Activated T-helper 1 cell treated with anti-CD3 and anti-CD28 coated beads, Interleukin-12 subunit alpha, Interleukin-12 subunit beta, Interleukin-2, Interleukin-4 antibody, amounts not matched to agents 30 ng/mL and 10 ng/mL and 1 ng/mL, durations not matched to agents 14 hours and 24 hours and 36 hours (primary cell): ENCODE measurements at regions of chr7 and their contacts with region 1.

Region 1: GRCh38 chr7:107816011-107816566 is 13.1 kb upstream of the SLC26A3 start:
- DNase-seq: no peak
- H3K4me3 Mint-ChIP-seq: peak overlapping the region; percentile 19
- H3K27ac Mint-ChIP-seq: peak overlapping the region; percentile 72
- H3K4me1 Mint-ChIP-seq: peaks cover 25% of the 10 kb centered on the region
- H3K27me3 Mint-ChIP-seq: no peaks in the 10 kb centered on the region

Region 2: DNA sequence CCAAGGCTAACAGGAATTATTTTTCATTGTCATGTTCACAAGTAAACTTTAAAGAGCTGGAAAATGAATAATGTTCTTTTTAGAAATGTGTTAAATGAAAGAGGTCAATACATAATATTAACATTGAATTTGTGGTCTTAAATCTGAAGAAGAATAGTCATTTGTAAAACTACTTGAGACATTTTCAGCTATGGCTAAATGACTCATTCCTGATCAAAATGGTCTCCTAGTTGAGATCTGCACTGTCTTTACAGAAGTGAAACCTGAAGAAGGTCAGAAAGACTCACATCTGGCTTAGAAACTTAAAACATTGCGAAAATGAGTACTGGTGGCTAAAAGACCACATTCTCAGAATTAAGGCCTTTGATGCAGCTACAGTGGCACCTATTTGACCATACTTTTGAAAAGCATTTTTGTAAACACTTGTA is 945.1 kb before region 1 on chr7:
- intact Hi-C with region 1: loop called (anchors 1 kb)
- DNase-seq: no peak
- H3K4me3 Mint-ChIP-seq: peak overlapping the region; percentile 43
- H3K27ac Mint-ChIP-seq: peak overlapping the region; percentile 64
- H3K4me1 Mint-ChIP-seq: peaks cover 75% of the 10 kb centered on the region
- H3K27me3 Mint-ChIP-seq: no peaks in the 10 kb centered on the region

Region 3: GRCh38 chr7:107694386-107694785 is 121.7 kb before region 1 on chr7:
- intact Hi-C with region 1: no loop called
- DNase-seq: no peak
- H3K4me3 Mint-ChIP-seq: no peak overlapping the region
- H3K27ac Mint-ChIP-seq: no peak overlapping the region
- H3K4me1 Mint-ChIP-seq: no peaks in the 10 kb centered on the region
- H3K27me3 Mint-ChIP-seq: no peaks in the 10 kb centered on the region

Region 4: DNA sequence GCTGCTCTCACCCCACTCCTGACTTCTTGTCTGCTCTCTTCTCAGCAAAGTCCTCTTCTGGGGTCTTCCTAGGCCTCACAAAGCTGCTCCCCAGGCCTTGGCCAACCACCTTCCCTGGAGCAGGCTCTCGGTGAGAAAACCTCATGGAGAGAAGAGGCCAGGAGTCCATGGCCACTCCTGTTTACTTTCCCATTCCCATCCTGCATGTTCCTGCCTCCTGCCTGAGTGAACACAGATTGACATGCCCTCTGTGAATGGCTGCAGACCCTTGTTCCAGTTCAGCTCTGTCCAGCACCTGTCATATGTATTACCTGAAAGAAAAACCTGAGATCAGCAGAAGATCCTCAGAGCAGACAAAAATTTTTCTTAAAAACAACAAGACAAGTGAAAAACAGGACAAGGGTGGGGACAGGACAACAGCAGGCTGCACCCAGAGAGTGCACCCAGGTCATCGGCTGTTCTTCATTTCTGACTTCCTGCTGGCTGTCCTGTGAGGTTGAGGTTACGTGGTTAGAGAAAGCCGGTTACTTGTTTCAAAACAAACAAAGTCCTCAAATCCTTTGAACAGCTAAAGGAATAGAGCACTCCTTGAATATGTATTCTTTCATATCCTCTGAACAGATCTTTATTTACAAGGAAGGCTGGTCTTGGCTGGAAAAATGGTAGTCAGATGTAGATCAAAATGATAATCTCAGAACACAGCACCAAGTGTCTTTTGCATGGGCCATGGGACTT is 40.9 kb after region 1 on chr7:
- intact Hi-C with region 1: loop called (anchors 2 kb)
- DNase-seq: peak; percentile 21
- H3K4me3 Mint-ChIP-seq: peak overlapping the region; percentile 6
- H3K27ac Mint-ChIP-seq: peak overlapping the region; percentile 74
- H3K4me1 Mint-ChIP-seq: peaks cover 22% of the 10 kb centered on the region
- H3K27me3 Mint-ChIP-seq: peaks cover under 1% of the 10 kb centered on the region

Region 5: GRCh38 chr7:107865956-107866775 is 50.1 kb after region 1 on chr7:
- intact Hi-C with region 1: loop called (anchors 1 kb)
- DNase-seq: no peak
- H3K4me3 Mint-ChIP-seq: peak overlapping the region; percentile 1
- H3K27ac Mint-ChIP-seq: peak overlapping the region; percentile 87
- H3K4me1 Mint-ChIP-seq: peaks cover 24% of the 10 kb centered on the region
- H3K27me3 Mint-ChIP-seq: peaks cover 1% of the 10 kb centered on the region